ENCODE measurements at regions of chr7 and their contacts with region 1.

Region 1: DNA sequence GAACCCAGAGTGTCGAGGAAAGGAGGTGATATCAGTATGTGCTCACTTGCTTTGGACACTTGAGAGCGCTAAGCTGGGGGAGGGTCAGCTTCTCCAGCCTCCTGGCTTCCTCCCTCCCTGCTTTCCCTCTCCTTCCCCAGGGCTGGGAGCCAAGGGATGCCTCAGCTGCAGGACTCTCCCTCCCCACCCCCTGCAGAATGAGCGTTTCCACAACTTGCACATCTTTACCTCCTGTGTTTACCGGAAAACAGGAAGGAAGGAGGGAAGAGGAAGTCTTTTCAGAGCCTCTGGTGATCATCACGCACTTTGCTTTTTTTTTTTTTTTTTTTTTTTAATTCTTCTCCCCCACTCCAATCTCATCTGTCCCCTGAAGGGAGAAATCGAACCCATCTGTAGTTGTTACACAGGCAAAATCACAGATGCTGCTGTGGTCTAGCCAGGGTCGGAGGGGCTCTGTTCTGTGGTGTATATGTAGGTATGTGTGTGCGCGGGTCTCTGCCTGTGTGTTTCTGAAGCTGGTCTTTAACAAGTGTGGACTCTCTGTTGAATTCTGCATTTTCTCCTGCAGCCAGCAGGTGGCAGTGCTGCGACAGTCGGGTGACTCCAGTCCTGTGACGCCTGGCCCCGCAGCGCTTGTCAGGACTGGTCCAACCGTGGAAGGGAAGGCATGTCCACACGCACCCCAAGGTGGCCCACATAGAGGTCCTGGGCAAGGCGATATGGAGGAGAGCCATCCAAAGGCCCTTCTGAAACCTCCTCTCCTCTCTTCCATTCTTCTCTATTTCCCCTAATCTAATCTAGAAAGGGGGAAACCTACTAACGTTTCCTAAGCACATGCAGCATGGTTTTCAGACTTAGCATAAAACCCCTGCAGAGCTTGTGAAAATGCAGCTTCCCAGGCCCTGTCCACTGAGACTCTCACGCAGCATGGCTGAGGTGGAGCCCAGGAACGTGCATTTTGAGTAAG is 257.6 kb downstream of the PLXNA4 start:
- DNase-seq: peak; percentile 83
- H3K4me3 ChIP-seq: peak overlapping the region; percentile 3
- H3K27ac ChIP-seq: peak overlapping the region; percentile 9
- H3K4me1 ChIP-seq: peaks cover 9% of the 10 kb centered on the region
- H3K27me3 ChIP-seq: no peaks in the 10 kb centered on the region
- CTCF ChIP-seq: peak; percentile 87

Region 2: GRCh38 chr7:131829947-131830558 is 488.6 kb before region 1 on chr7:
- intact Hi-C with region 1: no loop called
- DNase-seq: no peak
- H3K4me3 ChIP-seq: no peak overlapping the region
- H3K27ac ChIP-seq: no peak overlapping the region
- H3K4me1 ChIP-seq: no peaks in the 10 kb centered on the region
- H3K27me3 ChIP-seq: peaks cover 3% of the 10 kb centered on the region
- CTCF ChIP-seq: no peak

Region 3: DNA sequence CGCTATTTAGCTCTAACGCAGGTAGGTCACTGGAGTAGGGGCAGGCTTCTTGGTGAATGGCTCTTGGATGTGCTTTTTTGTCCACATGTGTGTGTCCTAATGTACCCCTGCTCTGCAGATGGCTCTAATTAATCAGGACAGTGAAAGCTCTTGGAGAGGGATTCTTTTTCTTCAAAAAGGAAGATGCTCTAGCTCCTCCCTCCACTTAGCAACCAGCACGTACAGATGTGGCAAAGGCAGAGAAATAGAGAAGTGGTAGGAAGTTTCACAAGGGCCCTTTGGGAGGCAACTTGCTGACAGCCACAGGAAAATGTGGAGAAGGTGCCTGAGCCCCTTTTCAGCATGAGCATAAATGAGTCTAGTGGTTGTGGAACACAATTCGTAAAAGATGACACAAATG is 35.9 kb after region 1 on chr7:
- intact Hi-C with region 1: no loop called
- DNase-seq: no peak
- H3K4me3 ChIP-seq: no peak overlapping the region
- H3K27ac ChIP-seq: no peak overlapping the region
- H3K4me1 ChIP-seq: no peaks in the 10 kb centered on the region
- H3K27me3 ChIP-seq: no peaks in the 10 kb centered on the region
- CTCF ChIP-seq: no peak

Region 4: DNA sequence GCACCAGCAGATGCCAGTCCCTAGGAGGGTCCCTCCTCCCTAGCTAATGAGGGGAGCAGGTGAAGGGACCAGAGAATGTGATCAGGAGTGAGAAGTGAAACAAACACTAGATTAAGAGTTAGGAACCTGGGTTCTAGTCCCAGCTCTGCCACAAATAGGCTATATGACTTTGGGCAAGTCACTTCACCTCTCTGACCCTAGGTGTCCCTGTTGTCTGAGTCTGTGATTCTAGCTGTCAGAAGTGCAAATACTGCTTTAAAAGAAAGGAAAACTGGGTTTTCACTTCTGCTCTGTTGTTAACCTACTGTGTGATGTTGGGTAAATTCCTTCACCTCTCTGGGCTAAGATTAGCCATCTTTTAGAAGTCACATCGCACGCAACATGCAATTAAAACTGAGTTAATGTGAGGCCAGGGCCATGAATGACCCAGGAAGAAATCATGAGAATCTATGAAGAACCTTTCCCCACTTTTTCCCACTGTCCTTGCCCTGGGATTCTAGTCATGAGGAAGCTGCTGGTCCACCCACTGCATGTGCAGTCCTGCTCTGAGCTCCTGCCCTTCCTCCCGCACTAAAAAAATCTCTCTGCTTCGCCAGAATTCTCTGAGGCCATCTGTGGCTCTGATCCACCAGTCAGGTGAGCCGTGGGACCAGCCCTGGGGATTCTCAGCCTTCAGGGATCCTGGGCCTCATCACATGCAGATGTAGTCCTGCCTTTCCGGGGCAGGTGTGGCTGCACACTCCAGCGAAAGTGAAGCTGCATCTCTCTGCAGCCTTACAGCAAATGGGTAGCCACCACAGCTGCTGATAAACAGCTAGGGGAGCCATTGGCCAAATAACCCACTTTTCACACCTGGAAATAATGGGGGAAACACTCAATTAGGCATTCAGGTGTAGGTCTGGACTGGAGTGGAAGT is 75.9 kb after region 1 on chr7:
- intact Hi-C with region 1: loop called (anchors 5 kb)
- DNase-seq: no peak
- H3K4me3 ChIP-seq: no peak overlapping the region
- H3K27ac ChIP-seq: no peak overlapping the region
- H3K4me1 ChIP-seq: no peaks in the 10 kb centered on the region
- H3K27me3 ChIP-seq: no peaks in the 10 kb centered on the region
- CTCF ChIP-seq: peak; percentile 18